ENCODE measurements at regions of chr2 and their contacts with region 1.

Region 1: DNA sequence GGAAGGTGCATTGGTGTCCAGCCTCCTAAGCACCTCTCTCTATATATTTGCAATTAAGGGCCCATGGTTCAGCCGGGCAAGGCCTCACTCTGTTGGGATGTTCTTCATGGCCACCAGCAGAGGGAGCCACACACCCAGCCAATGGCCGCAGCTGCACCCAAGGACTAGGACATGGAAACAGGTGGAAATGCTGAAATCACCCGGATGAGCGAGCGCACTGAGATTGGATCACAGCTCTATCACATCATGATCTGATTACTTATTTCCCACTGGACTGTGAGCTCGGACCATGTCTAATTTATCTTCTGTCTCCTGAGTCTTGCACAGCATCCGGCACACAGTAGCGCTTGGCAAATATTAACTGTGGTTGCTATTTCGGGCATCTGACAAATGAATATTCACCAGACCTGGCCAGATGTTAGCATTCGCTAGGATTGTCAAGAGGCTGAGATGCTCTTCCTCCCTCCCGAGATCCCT is 31.2 kb downstream of the KIF3C start:
- DNase-seq: peak; percentile 87
- ATAC-seq: peak; percentile 98
- H3K4me3 Mint-ChIP-seq: no peak overlapping the region
- H3K27ac Mint-ChIP-seq: no peak overlapping the region
- H3K4me1 Mint-ChIP-seq: no peaks in the 10 kb centered on the region
- H3K27me3 Mint-ChIP-seq: no peaks in the 10 kb centered on the region

Region 2: GRCh38 chr2:25899404-25899970 is 51.6 kb before region 1 on chr2:
- CTCF ChIA-PET with region 1: no interaction called
- POLR2A ChIA-PET with region 1: no interaction called
- intact Hi-C with region 1: no loop called
- DNase-seq: no peak
- ATAC-seq: no peak
- H3K4me3 Mint-ChIP-seq: no peak overlapping the region
- H3K27ac Mint-ChIP-seq: no peak overlapping the region
- H3K4me1 Mint-ChIP-seq: no peaks in the 10 kb centered on the region
- H3K27me3 Mint-ChIP-seq: no peaks in the 10 kb centered on the region

Region 3: GRCh38 chr2:25982273-25982967 is 31.3 kb after region 1 on chr2 and contains the start of gene KIF3C:
- CTCF ChIA-PET with region 1: interaction called, 11 read pairs
- POLR2A ChIA-PET with region 1: no interaction called
- intact Hi-C with region 1: no loop called
- DNase-seq: peak; percentile 85
- ATAC-seq: peak; percentile 89
- H3K4me3 Mint-ChIP-seq: peak within 1 kb of the TSS; percentile 77
- H3K27ac Mint-ChIP-seq: peak within 1 kb of the TSS; percentile 25
- H3K4me1 Mint-ChIP-seq: peaks cover 4% of the 10 kb centered on the region
- H3K27me3 Mint-ChIP-seq: no peaks in the 10 kb centered on the region
- total RNA-seq, gene KIF3C: 5.2 to 5.3 TPM

Region 4: GRCh38 chr2:26144953-26145680 is 194.0 kb after region 1 on chr2:
- CTCF ChIA-PET with region 1: interaction called, 16 read pairs
- POLR2A ChIA-PET with region 1: no interaction called
- intact Hi-C with region 1: loop called (anchors 1 to 2 kb)
- DNase-seq: peak; percentile 80
- ATAC-seq: peak; percentile 76
- H3K4me3 Mint-ChIP-seq: no peak overlapping the region
- H3K27ac Mint-ChIP-seq: no peak overlapping the region
- H3K4me1 Mint-ChIP-seq: no peaks in the 10 kb centered on the region
- H3K27me3 Mint-ChIP-seq: peaks cover 10% of the 10 kb centered on the region

Region 5: GRCh38 chr2:26469092-26469710 is 518.1 kb after region 1 on chr2:
- CTCF ChIA-PET with region 1: no interaction called
- POLR2A ChIA-PET with region 1: no interaction called
- intact Hi-C with region 1: loop called in 1 of 2 experiments (anchors 5 kb)
- DNase-seq: peak; percentile 88
- ATAC-seq: peak; percentile 80
- H3K4me3 Mint-ChIP-seq: no peak overlapping the region
- H3K27ac Mint-ChIP-seq: no peak overlapping the region
- H3K4me1 Mint-ChIP-seq: no peaks in the 10 kb centered on the region
- H3K27me3 Mint-ChIP-seq: no peaks in the 10 kb centered on the region